ENCODE measurements at regions of chr6 and their contacts with region 1.

Region 1: DNA sequence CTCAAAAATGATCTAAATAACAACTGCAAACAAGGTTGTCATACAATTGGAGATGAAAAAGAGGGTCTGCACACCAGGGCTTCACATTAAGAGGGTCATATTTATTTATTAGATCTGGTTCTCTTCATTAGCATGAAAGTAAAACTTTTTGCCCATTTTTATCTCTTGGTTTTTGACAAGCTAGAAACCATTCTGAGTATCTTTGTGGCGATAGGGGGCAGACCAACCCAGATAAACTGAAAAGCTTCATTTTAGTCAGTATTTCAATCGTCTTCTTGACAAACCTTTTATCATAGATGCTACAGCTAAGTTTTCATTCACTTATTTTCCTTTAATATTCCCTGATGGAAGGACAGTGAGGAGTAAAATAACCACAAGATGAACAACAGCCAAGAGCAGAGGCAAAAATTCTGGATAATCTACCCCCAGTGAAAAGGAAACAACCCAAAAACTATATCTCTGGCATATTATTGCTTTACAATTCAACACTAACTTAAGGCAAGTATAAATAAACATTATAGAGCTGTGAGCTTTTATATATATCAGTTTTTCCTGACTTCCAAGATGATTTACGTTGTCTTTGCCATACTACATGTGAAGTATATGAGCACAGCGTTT is 45.2 kb downstream of the THEMIS start:
- DNase-seq: peak; percentile 67
- ATAC-seq: peak; percentile 52
- H3K4me3 Mint-ChIP-seq: peak overlapping the region; percentile 33
- H3K27ac Mint-ChIP-seq: peak overlapping the region; percentile 83
- H3K4me1 Mint-ChIP-seq: peaks cover 81% of the 10 kb centered on the region
- H3K27me3 Mint-ChIP-seq: no peaks in the 10 kb centered on the region
- CTCF ChIP-seq: peak; percentile 73

Region 2: GRCh38 chr6:127342946-127343808 is 512.5 kb before region 1 on chr6 and contains the start of gene ECHDC1:
- CTCF ChIA-PET with region 1: no interaction called
- POLR2A ChIA-PET with region 1: no interaction called
- intact Hi-C with region 1: no loop called
- DNase-seq: peak; percentile 86
- ATAC-seq: peak; percentile 90
- H3K4me3 Mint-ChIP-seq: no peak within 1 kb of the TSS
- H3K27ac Mint-ChIP-seq: no peak within 1 kb of the TSS
- H3K4me1 Mint-ChIP-seq: peaks cover 12% of the 10 kb centered on the region
- H3K27me3 Mint-ChIP-seq: no peaks in the 10 kb centered on the region
- CTCF ChIP-seq: no peak
- total RNA-seq, gene ECHDC1: 50.2 to 51.1 TPM

Region 3: DNA sequence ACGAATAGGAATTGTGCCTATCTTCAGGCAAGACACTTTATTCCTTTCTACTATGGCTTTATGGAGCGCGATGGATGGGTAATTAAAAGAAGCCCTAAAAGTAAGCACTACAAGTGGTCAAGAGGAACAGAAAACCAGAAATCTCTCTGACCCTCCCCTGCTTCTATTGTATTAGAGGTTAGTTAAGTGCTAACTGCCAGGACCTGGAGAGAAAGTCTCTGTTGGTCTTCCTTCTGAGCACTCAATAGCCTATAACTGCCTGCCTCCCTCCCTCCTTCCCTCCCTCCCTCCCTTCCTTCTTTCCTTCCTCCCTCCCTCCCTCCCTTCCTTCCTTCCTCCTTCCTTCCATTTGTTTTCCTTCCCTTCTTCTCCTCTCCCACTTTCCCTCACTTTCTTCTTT is 145.0 kb before region 1 on chr6:
- CTCF ChIA-PET with region 1: no interaction called
- POLR2A ChIA-PET with region 1: no interaction called
- intact Hi-C with region 1: no loop called
- DNase-seq: no peak
- ATAC-seq: no peak
- H3K4me3 Mint-ChIP-seq: no peak overlapping the region
- H3K27ac Mint-ChIP-seq: no peak overlapping the region
- H3K4me1 Mint-ChIP-seq: peaks cover 6% of the 10 kb centered on the region
- H3K27me3 Mint-ChIP-seq: no peaks in the 10 kb centered on the region
- CTCF ChIP-seq: no peak

Region 4: GRCh38 chr6:127841811-127842210 is 13.8 kb before region 1 on chr6:
- CTCF ChIA-PET with region 1: interaction called, 29 read pairs
- POLR2A ChIA-PET with region 1: no interaction called
- intact Hi-C with region 1: no loop called
- DNase-seq: no peak
- ATAC-seq: no peak
- H3K4me3 Mint-ChIP-seq: no peak overlapping the region
- H3K27ac Mint-ChIP-seq: no peak overlapping the region
- H3K4me1 Mint-ChIP-seq: peaks cover 59% of the 10 kb centered on the region
- H3K27me3 Mint-ChIP-seq: no peaks in the 10 kb centered on the region
- CTCF ChIP-seq: no peak

Region 5: DNA sequence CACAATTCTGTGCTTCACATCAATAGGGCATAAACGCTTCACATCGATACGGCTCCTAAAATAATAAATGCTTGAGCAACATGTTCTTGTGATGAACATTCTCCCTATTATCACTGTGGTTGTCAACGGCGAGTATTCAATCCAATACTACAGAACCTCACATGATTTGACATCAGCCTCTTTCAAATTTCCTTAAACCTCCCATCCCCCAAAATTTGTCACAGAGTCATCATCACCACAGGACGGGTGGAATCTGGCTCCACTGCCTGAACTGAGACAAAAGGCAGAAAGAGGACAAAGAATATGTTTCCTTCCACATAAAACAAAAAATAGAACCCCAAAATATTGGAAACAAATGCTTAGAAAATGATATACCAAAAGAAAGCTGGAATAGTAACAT is 37.9 kb after region 1 on chr6:
- CTCF ChIA-PET with region 1: interaction called, 10 read pairs
- POLR2A ChIA-PET with region 1: interaction called, 3 read pairs
- intact Hi-C with region 1: no loop called
- DNase-seq: peak; percentile 49
- ATAC-seq: peak; percentile 66
- H3K4me3 Mint-ChIP-seq: peak overlapping the region; percentile 79
- H3K27ac Mint-ChIP-seq: peak overlapping the region; percentile 95
- H3K4me1 Mint-ChIP-seq: peaks cover 35% of the 10 kb centered on the region
- H3K27me3 Mint-ChIP-seq: no peaks in the 10 kb centered on the region
- CTCF ChIP-seq: no peak

Region 6: GRCh38 chr6:127907960-127908640 is 52.4 kb after region 1 on chr6:
- CTCF ChIA-PET with region 1: interaction called, 15 read pairs
- POLR2A ChIA-PET with region 1: no interaction called
- intact Hi-C with region 1: no loop called
- DNase-seq: peak; percentile 60
- ATAC-seq: peak; percentile 72
- H3K4me3 Mint-ChIP-seq: peak overlapping the region; percentile 70
- H3K27ac Mint-ChIP-seq: peak overlapping the region; percentile 88
- H3K4me1 Mint-ChIP-seq: peaks cover 71% of the 10 kb centered on the region
- H3K27me3 Mint-ChIP-seq: no peaks in the 10 kb centered on the region
- CTCF ChIP-seq: no peak

Region 7: GRCh38 chr6:127971945-127972391 is 116.3 kb after region 1 on chr6:
- CTCF ChIA-PET with region 1: interaction called, 25 read pairs
- POLR2A ChIA-PET with region 1: interaction called, 3 read pairs
- intact Hi-C with region 1: no loop called
- DNase-seq: peak; percentile 65
- ATAC-seq: peak; percentile 76
- H3K4me3 Mint-ChIP-seq: peak overlapping the region; percentile 80
- H3K27ac Mint-ChIP-seq: peak overlapping the region; percentile 96
- H3K4me1 Mint-ChIP-seq: peaks cover 79% of the 10 kb centered on the region
- H3K27me3 Mint-ChIP-seq: no peaks in the 10 kb centered on the region
- CTCF ChIP-seq: no peak

Region 8: GRCh38 chr6:128192972-128193371 is 337.3 kb after region 1 on chr6:
- CTCF ChIA-PET with region 1: no interaction called
- POLR2A ChIA-PET with region 1: no interaction called
- intact Hi-C with region 1: no loop called
- DNase-seq: no peak
- ATAC-seq: no peak
- H3K4me3 Mint-ChIP-seq: no peak overlapping the region
- H3K27ac Mint-ChIP-seq: no peak overlapping the region
- H3K4me1 Mint-ChIP-seq: no peaks in the 10 kb centered on the region
- H3K27me3 Mint-ChIP-seq: no peaks in the 10 kb centered on the region
- CTCF ChIP-seq: no peak

Region 9: DNA sequence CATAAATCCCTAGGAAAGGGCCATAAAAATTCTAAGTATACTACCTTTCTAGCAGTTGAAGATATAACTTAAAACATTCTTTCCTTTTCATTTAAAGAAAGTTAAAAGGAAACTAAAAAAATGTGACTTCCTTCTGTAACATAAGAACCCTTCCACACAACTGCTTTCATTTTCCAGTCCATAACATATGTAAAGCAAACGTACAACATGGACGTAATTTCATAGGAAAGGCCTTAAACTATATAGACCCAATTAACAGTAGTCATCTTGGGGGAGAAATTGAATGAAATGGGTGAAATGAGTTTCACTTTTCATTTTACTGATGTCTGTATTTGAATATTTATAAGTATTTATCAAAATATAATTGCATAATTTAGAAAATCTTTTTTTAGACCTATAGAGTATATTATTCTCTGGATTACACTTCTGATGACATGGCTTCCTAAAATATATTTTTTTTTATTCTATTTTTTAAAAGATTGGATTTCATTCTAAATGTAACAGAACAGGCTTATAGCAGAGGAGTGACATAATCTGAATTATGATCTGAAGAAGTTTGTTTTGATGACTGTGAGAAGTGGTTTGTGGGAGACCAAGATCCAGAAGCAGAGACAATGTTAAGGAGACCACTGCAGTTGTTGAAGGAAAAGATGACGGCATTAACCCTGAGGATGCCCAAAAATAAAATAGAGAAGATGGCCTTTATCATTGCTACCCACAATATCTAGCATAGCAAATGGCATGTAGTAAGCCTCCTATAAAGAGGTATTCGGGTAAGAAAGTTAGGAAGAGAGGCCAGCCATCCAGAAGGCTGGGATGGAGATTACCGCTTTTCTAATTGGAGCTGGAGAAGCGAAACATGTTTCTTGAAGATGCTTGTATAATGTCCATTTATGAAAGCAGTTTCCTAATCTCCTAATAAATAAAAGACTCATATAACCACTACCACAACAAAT is 404.4 kb after region 1 on chr6:
- CTCF ChIA-PET with region 1: no interaction called
- POLR2A ChIA-PET with region 1: no interaction called
- intact Hi-C with region 1: loop called (anchors 10 kb)
- DNase-seq: no peak
- ATAC-seq: peak; percentile 64
- H3K4me3 Mint-ChIP-seq: peak overlapping the region; percentile 68
- H3K27ac Mint-ChIP-seq: peak overlapping the region; percentile 77
- H3K4me1 Mint-ChIP-seq: peaks cover 26% of the 10 kb centered on the region
- H3K27me3 Mint-ChIP-seq: no peaks in the 10 kb centered on the region
- CTCF ChIP-seq: no peak

Measured in activated CD8-positive, alpha-beta T cell treated with anti-CD3 and anti-CD28 coated beads for 36 hours (primary cell).